ENCODE measurements at regions of chr15 and their contacts with region 1.

Region 1: DNA sequence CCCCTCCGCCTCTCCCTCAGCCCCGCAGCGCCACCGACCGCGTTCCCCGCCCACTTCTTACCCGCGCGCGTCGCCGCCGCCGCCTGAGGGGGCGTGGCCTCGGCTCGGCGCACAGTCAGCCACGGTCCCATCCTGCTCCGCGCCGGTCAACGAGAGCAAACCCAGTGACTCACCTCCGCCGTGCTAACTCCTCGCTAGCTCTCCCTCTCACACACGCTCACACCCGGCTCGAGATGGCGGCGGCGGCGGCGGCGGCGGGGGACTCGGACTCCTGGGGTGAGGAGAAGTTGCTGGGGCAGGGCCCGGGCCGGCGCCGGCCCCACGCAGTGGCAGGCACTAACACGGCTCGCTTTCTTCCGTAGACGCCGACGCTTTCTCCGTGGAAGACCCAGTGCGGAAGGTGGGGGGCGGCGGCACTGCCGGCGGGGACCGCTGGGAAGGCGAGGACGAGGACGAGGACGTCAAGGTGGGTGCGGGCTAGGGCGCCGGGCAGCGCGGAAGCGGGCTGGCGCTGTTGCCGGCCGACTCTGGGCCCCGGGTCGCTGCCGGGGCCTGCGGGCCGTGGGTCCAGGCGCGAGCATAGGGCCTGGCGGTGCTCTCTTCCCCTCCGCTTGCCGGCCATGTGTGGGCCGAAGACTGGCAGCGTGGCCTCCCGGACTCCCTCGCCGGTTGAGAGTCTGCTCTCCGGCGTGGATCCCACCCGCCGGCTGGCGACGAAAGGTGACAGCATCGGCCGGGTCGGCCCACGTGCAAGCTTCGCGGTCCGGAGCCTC is at the start of gene EIF3J:
- DNase-seq: peak; percentile 94 to 98
- ATAC-seq: peak; percentile 87 to 97 (median 90)
- H3K4me3 ChIP-seq: peak within 1 kb of the TSS; percentile 82
- H3K4me3 Mint-ChIP-seq: peak within 1 kb of the TSS; percentile 90
- H3K27ac ChIP-seq: peak within 1 kb of the TSS; percentile 76
- H3K27ac Mint-ChIP-seq: peak within 1 kb of the TSS; percentile 94 to 97
- H3K4me1 ChIP-seq: peaks cover 15% of the 10 kb centered on the region
- H3K4me1 Mint-ChIP-seq: peaks cover 44 to 47% of the 10 kb centered on the region in 2 donors
- H3K27me3 ChIP-seq: no peaks in the 10 kb centered on the region
- H3K27me3 Mint-ChIP-seq: no peaks in the 10 kb centered on the region
- CTCF ChIP-seq: no peak
- total RNA-seq, gene EIF3J: 53.1 to 75.7 (median 72.4) TPM

Region 2: DNA sequence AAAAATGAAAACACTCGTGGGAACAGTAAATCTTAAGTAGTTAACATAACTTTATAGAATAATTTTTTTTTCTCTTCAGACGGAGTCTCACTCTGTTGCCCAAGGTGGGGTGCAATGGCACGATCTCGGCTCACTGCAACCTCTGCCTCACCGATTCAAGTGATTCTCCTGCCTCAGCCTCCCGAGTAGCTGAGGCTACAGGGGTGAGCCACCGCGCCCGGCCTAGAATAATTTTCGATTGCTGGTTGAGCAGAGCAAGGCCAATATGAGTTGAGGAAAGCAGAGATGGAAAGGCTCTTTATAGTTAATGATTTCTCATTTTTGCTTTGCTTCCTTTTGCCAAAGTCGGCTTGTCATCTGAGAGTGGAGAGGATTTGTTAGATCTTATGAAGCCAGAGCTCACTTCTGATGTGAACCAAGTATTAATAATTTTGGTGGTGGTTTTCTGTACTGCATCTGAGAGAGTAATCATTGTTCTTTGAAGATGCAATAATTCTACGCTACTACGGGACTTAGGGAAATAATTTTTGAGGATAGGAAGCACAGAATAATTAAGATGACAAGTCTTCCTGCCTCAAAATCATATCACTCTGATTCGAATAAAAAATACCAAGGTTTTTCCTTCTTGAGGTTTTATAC is 250.2 kb before region 1 on chr15:
- intact Hi-C with region 1: loop called (anchors 2 kb)
- DNase-seq: peak in 1 of 2 donors; percentile 28
- ATAC-seq: no peak
- H3K4me3 ChIP-seq: peak overlapping the region; percentile 94
- H3K4me3 Mint-ChIP-seq: peak overlapping the region; percentile 97
- H3K27ac ChIP-seq: peak overlapping the region; percentile 96
- H3K27ac Mint-ChIP-seq: peak overlapping the region; percentile 98 to 100
- H3K4me1 ChIP-seq: peaks cover 13% of the 10 kb centered on the region
- H3K4me1 Mint-ChIP-seq: peaks cover 44 to 45% of the 10 kb centered on the region in 2 donors
- H3K27me3 ChIP-seq: no peaks in the 10 kb centered on the region
- H3K27me3 Mint-ChIP-seq: peaks cover 5 to 22% of the 10 kb centered on the region in 2 donors
- CTCF ChIP-seq: peak; percentile 14

Region 3: DNA sequence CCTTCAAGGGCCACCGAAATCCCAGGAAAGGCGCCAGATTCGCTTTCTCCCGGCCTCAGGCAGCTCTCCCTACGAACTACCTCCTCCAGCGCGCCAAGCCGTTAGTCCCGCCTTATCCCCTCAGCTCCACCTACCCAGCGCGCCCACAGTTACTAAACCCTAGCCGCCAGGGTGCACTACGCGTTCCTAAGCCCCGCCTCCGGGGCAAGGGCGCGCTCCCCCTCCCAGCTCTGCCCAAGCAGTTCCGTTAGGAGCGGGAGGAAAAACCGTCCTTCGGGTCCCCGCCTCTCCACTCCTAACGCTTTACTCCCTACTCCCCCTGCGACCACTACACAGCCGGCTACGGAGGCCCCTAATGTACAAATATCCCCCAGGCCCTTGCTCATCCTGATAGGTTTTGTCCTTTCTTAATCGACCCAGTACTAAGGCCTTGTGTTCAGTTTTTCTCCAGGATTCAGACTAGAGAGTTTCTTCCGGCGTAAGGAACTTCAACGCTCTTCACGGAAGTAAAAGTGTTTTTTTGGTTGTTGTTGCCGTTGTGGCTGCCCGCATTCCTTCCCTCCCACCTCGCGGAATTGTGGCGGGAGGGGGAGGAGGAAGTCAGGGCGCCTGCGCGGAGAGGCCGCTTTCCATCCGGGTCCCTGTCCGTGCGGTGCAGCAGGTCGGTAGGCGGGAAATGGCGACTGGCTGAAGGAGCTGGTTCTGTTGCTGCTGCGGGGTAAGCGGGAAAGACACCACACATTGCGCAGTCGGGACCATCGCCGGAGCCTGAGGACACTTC is 110.0 kb before region 1 on chr15 and contains the start of gene CTDSPL2:
- intact Hi-C with region 1: loop called (anchors 5 kb)
- DNase-seq: peak; percentile 93 to 96
- ATAC-seq: peak; percentile 94 to 99 (median 95)
- H3K4me3 ChIP-seq: peak within 1 kb of the TSS; percentile 82
- H3K4me3 Mint-ChIP-seq: peak within 1 kb of the TSS; percentile 99
- H3K27ac ChIP-seq: peak within 1 kb of the TSS; percentile 93
- H3K27ac Mint-ChIP-seq: peak within 1 kb of the TSS; percentile 97 to 100
- H3K4me1 ChIP-seq: peaks cover 11% of the 10 kb centered on the region
- H3K4me1 Mint-ChIP-seq: peaks cover 54 to 56% of the 10 kb centered on the region in 2 donors
- H3K27me3 ChIP-seq: no peaks in the 10 kb centered on the region
- H3K27me3 Mint-ChIP-seq: no peaks in the 10 kb centered on the region
- CTCF ChIP-seq: no peak
- total RNA-seq, gene CTDSPL2: 89.5 to 108 (median 96.5) TPM

Region 4: GRCh38 chr15:44489464-44489863 is 47.7 kb before region 1 on chr15:
- intact Hi-C with region 1: no loop called
- DNase-seq: no peak
- ATAC-seq: peak in 1 of 3 donors; percentile 58
- H3K4me3 ChIP-seq: no peak overlapping the region
- H3K4me3 Mint-ChIP-seq: no peak overlapping the region
- H3K27ac ChIP-seq: no peak overlapping the region
- H3K27ac Mint-ChIP-seq: peak overlapping the region; percentile 16 to 17
- H3K4me1 ChIP-seq: no peaks in the 10 kb centered on the region
- H3K4me1 Mint-ChIP-seq: peaks cover 6 to 13% of the 10 kb centered on the region in 2 donors
- H3K27me3 ChIP-seq: no peaks in the 10 kb centered on the region
- H3K27me3 Mint-ChIP-seq: no peaks in the 10 kb centered on the region
- CTCF ChIP-seq: no peak

Region 5: GRCh38 chr15:44728576-44729407 is 191.6 kb after region 1 on chr15:
- intact Hi-C with region 1: loop called (anchors 5 kb)
- DNase-seq: peak; percentile 94 to 98
- ATAC-seq: peak; percentile 75 to 92 (median 83)
- H3K4me3 ChIP-seq: peak overlapping the region; percentile 98
- H3K4me3 Mint-ChIP-seq: peak overlapping the region; percentile 98
- H3K27ac ChIP-seq: peak overlapping the region; percentile 96
- H3K27ac Mint-ChIP-seq: peak overlapping the region; percentile 100
- H3K4me1 ChIP-seq: peaks cover 53% of the 10 kb centered on the region
- H3K4me1 Mint-ChIP-seq: peaks cover 57 to 59% of the 10 kb centered on the region in 2 donors
- H3K27me3 ChIP-seq: no peaks in the 10 kb centered on the region
- H3K27me3 Mint-ChIP-seq: no peaks in the 10 kb centered on the region
- CTCF ChIP-seq: no peak

Measured in natural killer cell (primary cell).